Prostate gland (tissue), 2 donors: ENCODE measurements at regions of chr11 and their contacts with region 1.

Region 1: GRCh38 chr11:60874421-60875365 is 7.4 kb downstream of the ZP1 start:
- DNase-seq: no peak
- H3K4me3 ChIP-seq: no peak overlapping the region
- H3K27ac ChIP-seq: no peak overlapping the region
- H3K4me1 ChIP-seq: no peaks in the 10 kb centered on the region
- H3K27me3 ChIP-seq: no peaks in the 10 kb centered on the region
- CTCF ChIP-seq: no peak
- POLR2A ChIP-seq: no peak

Region 2: DNA sequence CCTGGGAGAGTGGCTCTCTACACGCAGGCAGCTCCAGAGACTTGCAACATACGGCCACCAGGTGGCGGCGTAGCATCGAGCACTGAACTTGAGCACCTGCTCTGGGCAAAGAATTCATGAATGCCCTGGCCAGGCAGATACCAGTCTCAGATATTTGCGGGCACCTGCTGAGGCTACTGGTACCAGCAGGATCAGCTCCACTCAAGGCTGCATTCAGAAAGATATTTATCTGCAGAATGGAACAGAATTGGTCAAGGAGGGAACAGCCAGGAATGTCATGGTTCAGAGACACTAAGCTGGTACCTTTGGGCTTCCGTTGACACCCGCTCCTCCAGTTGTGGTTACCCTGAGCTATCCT is 43.6 kb before region 1 on chr11:
- intact Hi-C with region 1: no loop called
- DNase-seq: peak; percentile 86
- H3K4me3 ChIP-seq: no peak overlapping the region
- H3K27ac ChIP-seq: no peak overlapping the region
- H3K4me1 ChIP-seq: no peaks in the 10 kb centered on the region
- H3K27me3 ChIP-seq: no peaks in the 10 kb centered on the region
- CTCF ChIP-seq: peak; percentile 67 to 96 (median 94)
- POLR2A ChIP-seq: no peak

Region 3: DNA sequence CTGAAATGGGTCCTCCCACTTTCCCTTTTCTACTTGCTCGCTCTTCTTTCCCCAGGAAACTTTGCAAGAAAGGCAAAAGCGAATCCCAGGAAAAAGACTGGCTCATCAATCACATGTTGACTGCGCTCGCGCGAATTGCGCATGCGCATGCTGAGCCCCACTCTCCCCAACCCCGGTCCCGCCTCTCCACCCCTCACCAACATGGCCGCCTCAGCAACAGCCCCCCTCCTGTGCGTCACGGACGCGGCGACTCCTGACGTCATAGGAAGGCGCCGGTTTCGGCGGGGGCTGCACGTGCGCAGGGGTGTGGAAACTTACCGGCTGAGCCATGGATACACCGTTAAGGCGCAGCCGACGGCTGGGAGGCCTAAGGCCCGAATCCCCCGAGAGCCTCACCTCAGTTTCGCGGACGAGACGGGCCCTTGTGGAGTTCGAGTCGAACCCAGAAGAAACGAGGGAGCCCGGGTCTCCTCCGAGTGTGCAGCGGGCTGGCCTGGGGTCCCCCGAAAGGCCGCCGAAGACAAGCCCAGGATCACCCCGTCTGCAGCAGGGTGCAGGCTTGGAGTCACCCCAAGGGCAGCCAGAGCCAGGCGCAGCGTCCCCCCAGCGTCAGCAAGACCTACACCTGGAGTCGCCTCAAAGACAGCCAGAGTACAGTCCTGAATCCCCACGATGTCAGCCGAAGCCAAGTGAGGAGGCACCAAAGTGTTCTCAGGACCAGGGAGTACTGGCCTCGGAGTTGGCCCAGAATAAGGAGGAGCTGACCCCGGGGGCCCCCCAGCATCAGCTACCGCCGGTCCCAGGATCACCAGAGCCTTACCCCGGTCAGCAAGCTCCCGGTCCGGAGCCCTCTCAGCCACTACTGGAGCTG is 32.7 kb before region 1 on chr11 and contains the start of gene CCDC86:
- intact Hi-C with region 1: loop called (anchors 5 kb)
- DNase-seq: peak; percentile 95
- H3K4me3 ChIP-seq: peak within 1 kb of the TSS; percentile 51 to 63
- H3K27ac ChIP-seq: peak within 1 kb of the TSS; percentile 70 to 79
- H3K4me1 ChIP-seq: peaks cover 22% of the 10 kb centered on the region
- H3K27me3 ChIP-seq: no peaks in the 10 kb centered on the region
- CTCF ChIP-seq: peak in 2 of 4 experiments; percentile 12 to 34
- POLR2A ChIP-seq: peak; percentile 29
- total RNA-seq, gene CCDC86: 48.7 to 56.7 TPM